Psoas muscle (tissue), 8 donors: ENCODE measurements at regions of chr12 and their contacts with region 1.

Region 1: DNA sequence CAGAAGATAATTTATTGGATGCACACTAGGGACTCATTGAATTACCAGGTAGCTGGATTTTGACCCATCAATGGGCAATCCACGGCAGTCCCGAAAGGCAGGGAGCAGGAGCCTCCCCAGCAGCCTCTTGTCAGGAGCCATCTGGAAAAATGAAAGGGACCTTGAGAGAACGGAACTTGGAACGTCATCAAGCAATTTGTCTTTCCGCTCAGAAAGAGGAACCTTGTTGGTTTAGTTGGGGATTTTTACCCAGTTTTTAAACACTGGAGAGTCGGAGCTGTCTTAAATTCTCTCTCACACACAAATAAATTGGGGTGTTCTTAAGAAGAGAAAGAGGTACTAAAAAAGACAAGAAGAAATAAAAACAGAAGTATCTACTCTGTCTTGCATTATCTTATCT is 1351.7 kb upstream of the TMEM132C start:
- DNase-seq: no peak
- ATAC-seq: no peak
- H3K4me3 ChIP-seq: no peak overlapping the region
- H3K27ac ChIP-seq: no peak overlapping the region
- H3K4me1 ChIP-seq: no peaks in the 10 kb centered on the region
- H3K27me3 ChIP-seq: no peaks in the 10 kb centered on the region
- CTCF ChIP-seq: no peak

Region 2: GRCh38 chr12:128323145-128323920 is 1408.0 kb after region 1 on chr12:
- intact Hi-C with region 1: loop called in 1 of 2 experiments (anchors 10 kb)
- DNase-seq: no peak
- ATAC-seq: no peak
- H3K4me3 ChIP-seq: no peak overlapping the region
- H3K27ac ChIP-seq: no peak overlapping the region
- H3K4me1 ChIP-seq: no peaks in the 10 kb centered on the region
- H3K27me3 ChIP-seq: no peaks in the 10 kb centered on the region
- CTCF ChIP-seq: no peak